GM23248 (cell line): ENCODE measurements at regions of chr3 and their contacts with region 1.

Region 1: GRCh38 chr3:183477801-183478456 is 49.5 kb upstream of the MCF2L2 start:
- DNase-seq: no peak
- H3K4me3 ChIP-seq: no peak overlapping the region
- H3K27ac ChIP-seq: no peak overlapping the region
- H3K4me1 ChIP-seq: 0 out of 2 replicates have a peak, but pooled peaks cover 3% of the 10 kb centered on the region
- H3K27me3 ChIP-seq: peaks cover 4% of the 10 kb centered on the region

Region 2: DNA sequence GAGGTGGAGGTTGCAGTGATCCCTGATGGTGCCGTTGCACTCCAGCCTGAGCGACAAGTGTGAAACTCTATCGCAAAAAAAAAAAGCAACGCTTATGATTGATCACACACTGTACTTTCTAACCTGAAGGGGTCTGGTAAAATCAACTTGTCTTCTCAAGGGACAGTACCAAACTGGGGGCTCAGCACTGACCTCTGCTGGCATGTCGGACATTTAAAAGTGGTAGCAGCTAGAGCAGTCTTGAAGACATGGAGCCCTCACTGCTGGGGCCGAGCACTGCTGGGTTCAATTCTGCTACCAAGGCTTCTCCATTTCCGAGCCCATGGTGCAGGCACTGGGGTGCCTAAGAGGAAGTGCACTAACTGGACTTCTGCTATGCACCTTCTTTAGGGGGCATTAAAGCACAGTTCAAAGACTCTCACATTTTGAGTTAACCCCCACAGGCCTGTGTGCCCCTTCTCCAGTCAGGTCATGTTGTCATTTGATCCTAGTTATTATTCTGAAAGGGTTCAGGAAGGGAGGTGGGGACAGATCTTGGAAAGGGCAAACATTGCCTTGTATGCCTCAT is 288.9 kb before region 1 on chr3:
- in situ Hi-C with region 1: no loop called
- DNase-seq: peak; percentile 17
- H3K4me3 ChIP-seq: no peak overlapping the region
- H3K27ac ChIP-seq: no peak overlapping the region
- H3K4me1 ChIP-seq: peaks cover 15% of the 10 kb centered on the region
- H3K27me3 ChIP-seq: no peaks in the 10 kb centered on the region

Region 3: GRCh38 chr3:183680061-183680460 is 202.1 kb after region 1 on chr3:
- in situ Hi-C with region 1: no loop called
- DNase-seq: no peak
- H3K4me3 ChIP-seq: no peak overlapping the region
- H3K27ac ChIP-seq: no peak overlapping the region
- H3K4me1 ChIP-seq: no peaks in the 10 kb centered on the region
- H3K27me3 ChIP-seq: no peaks in the 10 kb centered on the region

Region 4: DNA sequence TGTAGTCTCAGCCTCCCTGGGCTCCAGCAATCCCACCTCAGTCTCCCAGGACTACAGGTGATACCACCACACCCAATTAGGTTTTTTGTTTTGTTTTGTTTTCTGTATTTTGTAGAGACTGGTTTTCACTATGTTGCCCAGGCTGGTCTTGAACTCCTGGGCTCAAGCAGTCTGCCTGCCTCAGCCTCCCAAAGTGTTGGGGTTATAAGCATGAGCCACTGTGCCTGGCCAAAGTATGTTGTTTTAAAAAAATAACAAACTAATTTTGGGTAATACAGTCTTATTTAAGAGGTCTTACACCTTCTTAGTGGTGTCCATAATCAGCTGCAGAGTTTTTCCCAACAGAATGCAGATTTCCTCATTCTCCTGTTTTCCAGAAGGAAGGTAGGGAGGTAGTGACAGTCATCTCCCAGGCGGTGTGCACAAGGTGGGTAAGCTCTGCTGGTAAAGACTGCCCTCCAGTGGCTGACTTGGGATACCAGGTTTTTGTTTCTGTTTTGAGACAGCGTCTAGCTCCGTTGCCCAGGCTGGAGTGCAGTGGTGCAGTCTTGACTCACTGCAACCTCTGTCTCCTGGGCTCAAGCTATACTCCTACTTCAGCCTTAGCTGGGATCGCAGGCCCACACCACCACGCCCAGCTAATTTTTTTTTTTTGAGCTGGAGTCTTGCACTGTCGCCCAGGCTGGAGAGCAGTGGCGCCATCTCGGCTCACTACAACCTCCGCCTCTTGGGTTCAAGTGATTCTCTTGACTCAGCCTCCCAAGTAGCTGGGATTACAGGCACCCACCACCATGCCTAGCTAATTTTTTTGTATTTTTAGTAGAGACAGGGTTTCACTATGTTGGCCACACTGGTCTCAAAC is 289.0 kb after region 1 on chr3:
- in situ Hi-C with region 1: loop called (anchors 10 kb)
- DNase-seq: peak; percentile 85
- H3K4me3 ChIP-seq: no peak overlapping the region
- H3K27ac ChIP-seq: no peak overlapping the region
- H3K4me1 ChIP-seq: peaks cover 9% of the 10 kb centered on the region
- H3K27me3 ChIP-seq: no peaks in the 10 kb centered on the region